Mammary epithelial cell (primary cell): ENCODE measurements at regions of chr4 and their contacts with region 1.

Region 1: GRCh38 chr4:76213415-76214176 is at the start of gene SCARB2:
- DNase-seq: peak; percentile 84
- H3K4me3 ChIP-seq: peak within 1 kb of the TSS; percentile 87 to 90 (median 89)
- H3K27ac ChIP-seq: peak within 1 kb of the TSS; percentile 77
- H3K4me1 ChIP-seq: peaks cover 32% of the 10 kb centered on the region
- H3K27me3 ChIP-seq: no peaks in the 10 kb centered on the region
- CTCF ChIP-seq: no peak
- total RNA-seq, gene SCARB2: 75.6 to 103 TPM

Region 2: DNA sequence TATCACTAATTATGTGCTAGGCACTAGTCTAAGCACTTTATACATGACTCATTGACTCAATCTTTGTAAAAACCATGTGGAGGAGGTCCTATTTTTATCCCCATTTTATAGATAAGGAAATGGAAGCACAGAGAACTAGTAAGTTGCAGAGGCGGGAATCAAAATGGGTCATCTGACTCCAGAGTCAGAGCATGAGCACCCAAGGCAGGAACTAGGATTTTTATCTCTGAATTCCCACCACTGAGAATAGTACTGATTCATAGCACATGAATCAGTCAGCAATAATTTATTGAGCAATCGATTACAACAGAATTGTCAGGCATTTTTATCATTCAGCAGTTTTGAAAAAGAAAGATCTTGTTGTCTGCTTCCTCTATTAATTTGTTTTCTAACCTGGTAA is 19.3 kb before region 1 on chr4:
- CTCF ChIA-PET with region 1: interaction called, 3 read pairs
- dilution Hi-C with region 1: no loop called
- in situ Hi-C with region 1: no loop called
- intact Hi-C with region 1: loop called (anchors 2 kb)
- DNase-seq: peak; percentile 96
- H3K4me3 ChIP-seq: no peak overlapping the region
- H3K27ac ChIP-seq: peak overlapping the region; percentile 84
- H3K4me1 ChIP-seq: peaks cover 59% of the 10 kb centered on the region
- H3K27me3 ChIP-seq: no peaks in the 10 kb centered on the region
- CTCF ChIP-seq: no peak

Region 3: DNA sequence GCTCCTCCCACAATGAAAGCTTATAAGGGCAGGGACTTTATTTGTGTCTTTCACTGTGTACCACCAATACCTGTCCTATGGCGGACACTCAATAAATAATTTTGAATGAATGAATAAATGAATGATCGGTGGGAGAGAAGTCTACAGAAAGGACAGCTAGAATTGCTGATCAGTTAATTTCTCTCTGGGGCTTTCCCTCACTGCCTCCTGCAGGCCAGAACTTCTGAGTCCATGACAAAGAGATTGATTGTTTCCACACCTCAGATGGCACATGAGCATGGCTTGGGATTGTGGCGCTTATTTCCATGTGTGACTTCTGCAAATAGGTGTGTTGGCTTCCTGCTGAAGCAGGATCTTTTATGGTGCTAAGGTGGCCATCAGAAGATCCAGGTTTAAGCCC is 44.2 kb after region 1 on chr4:
- CTCF ChIA-PET with region 1: no interaction called
- dilution Hi-C with region 1: no loop called
- in situ Hi-C with region 1: no loop called
- intact Hi-C with region 1: no loop called
- DNase-seq: no peak
- H3K4me3 ChIP-seq: no peak overlapping the region
- H3K27ac ChIP-seq: no peak overlapping the region
- H3K4me1 ChIP-seq: no peaks in the 10 kb centered on the region
- H3K27me3 ChIP-seq: peaks cover 2% of the 10 kb centered on the region
- CTCF ChIP-seq: peak in 1 of 2 donors; percentile 4